MCF 10A (cell line): ENCODE measurements at regions of chr16 and their contacts with region 1.

Region 1: GRCh38 chr16:648781-649589 is at the start of gene WDR90:
- DNase-seq: peak; percentile 91
- H3K4me3 Mint-ChIP-seq: peak within 1 kb of the TSS; percentile 74
- H3K27ac Mint-ChIP-seq: peak within 1 kb of the TSS; percentile 88
- H3K4me1 Mint-ChIP-seq: peaks cover 14% of the 10 kb centered on the region
- H3K27me3 Mint-ChIP-seq: no peaks in the 10 kb centered on the region
- CTCF ChIP-seq: no peak
- total RNA-seq, gene WDR90: 40.4 and 47.9 TPM in 2 replicates

Region 2: DNA sequence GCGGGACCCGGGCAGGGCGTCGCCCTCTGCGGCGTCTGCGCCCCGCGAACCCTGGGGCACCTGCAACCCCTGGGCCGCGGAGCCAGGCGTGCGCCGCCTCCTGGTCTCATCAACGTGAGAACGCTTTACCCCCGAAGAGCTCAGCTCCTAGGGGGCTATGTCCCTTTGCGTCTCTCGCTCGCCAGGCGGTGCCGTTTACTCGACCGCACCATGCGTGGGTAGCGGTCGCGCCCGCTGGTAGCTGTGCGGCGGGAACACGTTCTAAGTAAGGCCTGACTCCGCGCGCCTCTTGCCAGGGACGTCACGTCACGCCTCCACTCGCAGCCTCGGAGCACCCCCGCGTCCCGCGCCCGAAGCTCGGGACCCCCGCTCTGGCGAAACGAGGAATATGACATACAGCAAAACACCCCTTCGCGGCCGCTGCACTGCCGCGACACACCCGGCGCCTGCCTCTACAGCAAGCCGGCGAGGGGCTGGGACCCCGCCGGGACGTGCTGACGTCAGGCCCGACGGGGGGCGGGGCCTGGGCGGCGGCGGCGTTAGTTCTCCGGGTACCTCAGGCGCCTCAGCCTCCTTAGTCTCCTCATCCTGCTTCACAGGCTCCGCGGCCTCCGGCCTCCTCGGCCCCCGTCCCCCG is 223.8 kb before region 1 on chr16 and contains the start of gene RAB11FIP3:
- CTCF ChIA-PET with region 1: no interaction called
- POLR2A ChIA-PET with region 1: no interaction called
- intact Hi-C with region 1: no loop called
- DNase-seq: peak; percentile 74
- H3K4me3 Mint-ChIP-seq: peak within 1 kb of the TSS; percentile 73
- H3K27ac Mint-ChIP-seq: peak within 1 kb of the TSS; percentile 71
- H3K4me1 Mint-ChIP-seq: peaks cover 35% of the 10 kb centered on the region
- H3K27me3 Mint-ChIP-seq: no peaks in the 10 kb centered on the region
- CTCF ChIP-seq: no peak
- total RNA-seq, gene RAB11FIP3: 37.5 and 40.6 TPM in 2 replicates

Region 3: GRCh38 chr16:667780-668518 is 19.0 kb after region 1 on chr16 and contains the start of gene RHOT2:
- CTCF ChIA-PET with region 1: interaction called, 7 read pairs
- POLR2A ChIA-PET with region 1: interaction called, 17 read pairs
- intact Hi-C with region 1: no loop called
- DNase-seq: peak; percentile 87
- H3K4me3 Mint-ChIP-seq: peak within 1 kb of the TSS; percentile 75
- H3K27ac Mint-ChIP-seq: peak within 1 kb of the TSS; percentile 85
- H3K4me1 Mint-ChIP-seq: no peaks in the 10 kb centered on the region
- H3K27me3 Mint-ChIP-seq: no peaks in the 10 kb centered on the region
- CTCF ChIP-seq: peak; percentile 67
- total RNA-seq, gene RHOT2: 110 and 118 TPM in 2 replicates